ENCODE measurements at regions of chr11 and their contacts with region 1.

Region 1: DNA sequence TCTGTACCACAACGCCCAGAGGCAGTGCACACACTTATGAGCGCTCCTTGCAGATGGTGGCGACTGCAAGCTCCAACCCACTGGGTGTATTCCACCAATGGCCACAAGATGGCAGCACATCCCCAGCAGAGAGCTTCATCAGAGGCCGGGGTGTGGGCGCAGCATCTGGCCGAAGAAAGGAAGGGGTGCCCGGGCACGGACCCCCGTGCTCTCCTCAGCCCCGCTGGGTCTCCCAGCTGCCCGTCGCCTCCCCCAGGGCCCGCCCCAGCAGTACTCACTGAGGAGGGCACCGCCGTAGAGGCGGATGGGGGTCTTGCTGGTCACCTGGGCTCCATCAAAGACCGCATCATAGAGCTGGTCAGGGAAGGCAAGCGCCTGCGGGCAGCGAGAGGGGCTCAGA is 14.2 kb downstream of the TP53I11 start:
- DNase-seq: peak; percentile 86

Region 2: DNA sequence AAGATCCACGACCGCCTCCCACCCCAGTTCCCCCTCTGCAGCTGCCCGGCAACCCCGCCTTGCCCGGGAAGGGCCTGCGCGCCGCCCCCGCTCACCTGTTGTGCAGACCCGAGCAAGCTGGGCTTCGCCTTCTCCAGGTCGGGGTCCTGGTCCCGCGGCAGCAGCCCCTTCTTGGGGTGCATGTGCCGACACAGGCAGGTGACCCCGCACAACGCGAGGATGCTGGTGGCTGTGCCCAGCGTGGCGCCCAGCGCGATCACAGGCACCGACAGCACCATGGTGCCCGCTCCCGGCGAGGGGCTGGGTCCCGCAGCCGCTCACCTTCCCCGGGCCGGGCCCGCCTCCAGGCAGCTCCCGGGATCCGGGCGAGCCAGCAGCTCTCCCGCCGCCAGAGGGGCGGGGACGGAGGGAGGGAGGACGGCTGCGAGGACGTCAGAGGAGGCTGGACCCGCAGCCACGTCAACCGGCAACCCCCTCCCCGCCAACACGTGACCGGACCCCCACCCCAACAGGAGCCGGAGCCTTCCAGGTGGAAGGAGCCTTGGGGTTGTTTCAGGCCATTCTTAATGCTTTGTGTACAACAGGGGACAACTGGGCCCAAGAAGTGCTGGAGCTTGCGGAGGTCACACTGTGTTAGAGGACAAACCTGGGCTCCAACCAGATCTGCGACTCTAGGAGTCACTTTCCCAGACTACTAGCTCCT is 349.6 kb after region 1 on chr11 and contains the start of gene SYT13:
- in situ Hi-C with region 1: loop called (anchors 25 kb)
- DNase-seq: no peak

Measured in KBM-7 (cell line).